ENCODE measurements at regions of chr1 and their contacts with region 1.

Region 1: DNA sequence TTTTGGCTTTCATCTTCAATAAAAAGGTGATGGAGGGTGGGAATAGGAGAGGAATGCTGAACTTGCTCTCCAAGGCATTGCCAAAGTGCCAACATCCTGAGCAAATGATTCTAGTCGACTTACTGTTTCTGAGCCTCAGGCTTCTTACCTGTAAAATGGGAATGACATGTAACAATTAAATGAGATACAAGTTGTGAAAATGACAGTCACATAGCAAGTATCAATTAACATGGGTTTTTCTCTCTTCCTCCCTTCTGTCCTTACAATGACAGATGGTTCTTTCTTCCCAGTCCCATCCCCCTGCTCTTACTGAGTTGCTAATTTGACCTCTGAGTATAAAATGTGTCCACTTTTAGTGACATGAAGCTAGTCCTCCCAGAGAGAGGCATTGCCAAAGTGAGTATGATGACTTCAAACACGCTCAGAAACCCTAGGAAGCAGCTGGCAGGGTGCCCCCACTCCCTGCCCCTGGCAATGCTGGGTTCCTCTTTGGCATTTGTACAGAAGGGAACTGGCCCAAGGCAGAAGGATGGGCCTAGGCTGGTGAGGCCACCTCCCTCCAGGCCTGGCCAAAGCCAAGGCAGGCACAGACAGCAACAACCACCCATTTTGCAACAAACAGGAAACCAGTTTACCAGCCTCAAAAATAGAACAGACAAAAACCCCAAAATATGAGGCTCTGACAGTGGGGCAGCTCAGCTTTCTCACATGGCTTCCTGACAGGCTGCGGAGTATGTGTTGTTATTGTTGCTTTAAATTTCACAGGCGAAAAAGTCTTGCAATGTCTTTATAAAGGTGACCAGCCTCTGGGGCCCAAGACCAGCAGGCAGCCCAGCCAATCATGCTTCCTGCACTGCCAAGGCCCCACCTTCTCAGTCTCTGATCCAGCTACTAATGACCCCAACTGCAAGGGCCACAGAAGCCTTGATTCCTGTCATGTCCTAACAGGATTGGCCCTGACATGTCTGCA is 115.9 kb downstream of the HIVEP3 start:
- DNase-seq: peak; percentile 47 to 61
- H3K4me3 ChIP-seq: no peak overlapping the region
- H3K27ac ChIP-seq: peak overlapping the region in 1 of 3 donors; percentile 13
- H3K4me1 ChIP-seq: peaks cover 11% of the 10 kb centered on the region in 2 donors
- H3K27me3 ChIP-seq: no peaks in the 10 kb centered on the region
- CTCF ChIP-seq: no peak
- POLR2A ChIP-seq: no peak

Region 2: DNA sequence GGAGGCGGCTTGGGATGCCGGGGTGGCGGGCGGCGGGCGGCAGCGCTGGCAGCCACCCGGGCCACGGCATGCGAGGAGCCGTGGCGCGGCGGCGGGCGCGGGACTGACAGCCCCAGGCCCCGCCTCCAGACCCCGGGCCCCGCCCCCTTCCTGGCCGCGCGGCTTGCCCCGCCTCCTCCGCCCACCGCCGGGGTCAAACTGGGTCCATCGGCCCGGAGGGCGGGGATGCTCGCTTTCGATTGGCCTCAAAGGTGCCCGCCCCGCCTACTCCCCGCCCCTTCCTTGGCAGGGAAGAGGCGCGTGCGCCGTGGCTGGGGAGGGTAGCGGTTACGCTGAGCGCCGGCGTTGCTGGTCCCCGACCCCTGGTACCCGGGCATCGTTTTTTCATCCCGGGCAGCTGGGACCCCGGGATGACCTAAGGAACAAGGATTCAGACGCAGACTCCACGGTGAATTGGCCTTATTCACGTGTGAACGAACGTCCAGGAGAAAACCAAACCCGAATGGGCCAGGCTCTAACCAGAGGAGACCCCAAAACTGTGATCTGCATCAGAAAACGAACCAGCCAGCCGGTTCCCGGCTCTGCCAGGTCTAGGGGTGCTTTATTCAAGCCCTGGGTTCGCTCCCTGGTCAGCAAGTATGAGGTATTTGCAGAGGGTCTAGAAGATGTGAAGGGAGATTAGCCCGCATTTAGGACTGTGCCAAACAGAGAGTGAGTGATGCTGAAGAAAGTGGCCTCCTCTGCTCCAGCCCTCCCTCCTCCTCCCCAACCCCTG is 233.2 kb after region 1 on chr1:
- intact Hi-C with region 1: loop called (anchors 10 kb)
- DNase-seq: peak; percentile 98
- H3K4me3 ChIP-seq: peak overlapping the region in 2 of 3 donors; percentile 35 to 87
- H3K27ac ChIP-seq: peak overlapping the region in 2 of 3 donors; percentile 75 to 88
- H3K4me1 ChIP-seq: peaks cover 8 to 13% of the 10 kb centered on the region in 2 donors
- H3K27me3 ChIP-seq: no peaks in the 10 kb centered on the region
- CTCF ChIP-seq: no peak
- POLR2A ChIP-seq: peak in 1 of 2 donors; percentile 58

Measured in thyroid gland (tissue), 4 donors.